OCI-LY7 (cell line): ENCODE measurements at regions of chr6 and their contacts with region 1.

Region 1: DNA sequence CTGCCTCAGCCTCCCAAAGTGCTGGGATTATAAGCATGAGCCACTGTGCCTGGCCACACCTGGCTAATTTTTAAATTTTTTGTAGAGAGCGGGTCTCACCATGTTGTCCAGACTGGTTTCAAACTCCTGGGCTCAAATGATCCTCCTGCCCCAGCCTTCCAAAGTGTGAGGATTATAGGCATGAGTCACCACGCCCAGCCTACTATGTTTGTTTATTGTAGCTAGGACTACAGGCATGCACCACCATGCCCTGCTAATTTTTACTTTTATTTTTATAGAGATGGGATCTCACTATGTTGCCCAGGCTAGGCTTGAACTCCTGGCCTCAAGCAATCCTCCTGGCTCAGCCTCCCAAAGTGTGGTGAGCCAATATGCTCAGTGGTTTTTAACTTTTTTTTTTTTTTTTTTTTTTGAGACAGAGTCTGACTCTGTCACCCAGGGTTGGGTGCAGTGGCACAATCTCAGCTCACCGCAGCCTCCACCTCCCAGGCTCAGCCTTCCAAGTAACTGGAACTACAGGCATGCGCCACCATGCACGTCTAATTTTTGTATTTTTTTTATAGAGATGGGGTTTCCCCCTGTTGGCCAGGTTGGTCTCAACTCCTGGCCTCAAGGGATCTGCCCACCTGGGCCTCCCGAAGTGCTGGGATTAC is 12.0 kb upstream of the DDX43 start:
- DNase-seq: no peak
- H3K4me3 ChIP-seq: no peak overlapping the region
- H3K27ac ChIP-seq: no peak overlapping the region
- H3K4me1 ChIP-seq: no peaks in the 10 kb centered on the region
- CTCF ChIP-seq: no peak

Region 2: GRCh38 chr6:73329201-73329600 is 53.4 kb before region 1 on chr6:
- CTCF ChIA-PET with region 1: no interaction called
- POLR2A ChIA-PET with region 1: no interaction called
- intact Hi-C with region 1: no loop called
- DNase-seq: no peak
- H3K4me3 ChIP-seq: no peak overlapping the region
- H3K27ac ChIP-seq: no peak overlapping the region
- H3K4me1 ChIP-seq: peaks cover 5% of the 10 kb centered on the region
- CTCF ChIP-seq: no peak

Region 3: GRCh38 chr6:73393278-73393677 is 10.7 kb after region 1 on chr6:
- CTCF ChIA-PET with region 1: no interaction called
- POLR2A ChIA-PET with region 1: interaction called, 11 read pairs
- intact Hi-C with region 1: no loop called
- DNase-seq: no peak
- H3K4me3 ChIP-seq: no peak overlapping the region
- H3K27ac ChIP-seq: no peak overlapping the region
- H3K4me1 ChIP-seq: peaks cover 3% of the 10 kb centered on the region
- CTCF ChIP-seq: no peak